ENCODE measurements at regions of chr20 and their contacts with region 1.

Region 1: GRCh38 chr20:62121776-62122631 is at the start of gene LSM14B:
- DNase-seq: peak; percentile 96
- H3K4me3 ChIP-seq: peak within 1 kb of the TSS; percentile 83 to 90
- H3K27ac ChIP-seq: peak within 1 kb of the TSS; percentile 96 to 97
- H3K4me1 ChIP-seq: peaks cover 15% of the 10 kb centered on the region
- H3K27me3 ChIP-seq: no peaks in the 10 kb centered on the region
- CTCF ChIP-seq: no peak
- POLR2A ChIP-seq: no peak
- total RNA-seq, gene LSM14B: 116 to 137 TPM

Region 2: GRCh38 chr20:62020935-62021701 is 100.9 kb before region 1 on chr20:
- intact Hi-C with region 1: loop called (anchors 5 kb)
- DNase-seq: peak; percentile 86
- H3K4me3 ChIP-seq: no peak overlapping the region
- H3K27ac ChIP-seq: peak overlapping the region; percentile 21 to 72
- H3K4me1 ChIP-seq: peaks cover 70% of the 10 kb centered on the region
- H3K27me3 ChIP-seq: no peaks in the 10 kb centered on the region
- CTCF ChIP-seq: no peak
- POLR2A ChIP-seq: no peak

Region 3: GRCh38 chr20:62065669-62066338 is 56.2 kb before region 1 on chr20 and contains the start of gene TAF4:
- intact Hi-C with region 1: loop called (anchors 5 kb)
- DNase-seq: peak; percentile 76
- H3K4me3 ChIP-seq: peak within 1 kb of the TSS; percentile 67 to 73
- H3K27ac ChIP-seq: peak within 1 kb of the TSS; percentile 86 to 89
- H3K4me1 ChIP-seq: peaks cover 34% of the 10 kb centered on the region
- H3K27me3 ChIP-seq: no peaks in the 10 kb centered on the region
- CTCF ChIP-seq: no peak
- POLR2A ChIP-seq: peak; percentile 75
- total RNA-seq, gene TAF4: 107 to 111 TPM

Region 4: DNA sequence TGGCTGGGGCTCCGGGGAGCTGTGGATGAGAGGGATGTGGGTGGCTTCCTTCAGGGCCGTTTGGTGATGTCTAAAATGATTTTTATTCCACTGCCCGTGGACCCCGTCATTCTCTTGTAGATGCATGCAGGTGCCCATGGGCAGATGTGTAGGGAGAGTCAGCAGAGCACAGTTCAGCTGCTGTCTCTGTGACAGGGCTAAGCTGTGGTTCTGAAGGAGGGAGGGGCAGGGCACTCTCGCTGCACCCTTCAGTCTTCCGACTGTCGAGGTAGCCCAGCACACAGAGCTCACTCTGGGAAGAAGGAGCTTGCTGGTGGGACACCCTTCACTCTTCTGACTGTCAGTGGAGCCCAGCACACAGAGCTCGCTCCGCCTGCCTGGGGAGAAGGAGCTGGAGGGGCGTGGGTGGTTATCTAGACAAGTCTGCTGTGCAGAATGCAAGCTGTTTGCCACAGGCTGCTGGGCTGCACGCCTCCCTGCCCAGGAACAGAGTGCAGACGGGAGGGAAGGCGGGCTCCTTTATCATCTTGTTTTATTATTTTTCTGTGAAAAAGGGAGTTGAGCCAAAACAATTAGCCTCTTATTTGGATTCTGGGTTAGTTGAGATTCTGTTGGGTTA is 152.4 kb after region 1 on chr20:
- intact Hi-C with region 1: no loop called
- DNase-seq: peak; percentile 86
- H3K4me3 ChIP-seq: no peak overlapping the region
- H3K27ac ChIP-seq: peak overlapping the region in 1 of 2 donors; percentile 1
- H3K4me1 ChIP-seq: peaks cover 29% of the 10 kb centered on the region
- H3K27me3 ChIP-seq: no peaks in the 10 kb centered on the region
- CTCF ChIP-seq: no peak
- POLR2A ChIP-seq: no peak